ENCODE measurements at regions of chr1 and their contacts with region 1.

Region 1: DNA sequence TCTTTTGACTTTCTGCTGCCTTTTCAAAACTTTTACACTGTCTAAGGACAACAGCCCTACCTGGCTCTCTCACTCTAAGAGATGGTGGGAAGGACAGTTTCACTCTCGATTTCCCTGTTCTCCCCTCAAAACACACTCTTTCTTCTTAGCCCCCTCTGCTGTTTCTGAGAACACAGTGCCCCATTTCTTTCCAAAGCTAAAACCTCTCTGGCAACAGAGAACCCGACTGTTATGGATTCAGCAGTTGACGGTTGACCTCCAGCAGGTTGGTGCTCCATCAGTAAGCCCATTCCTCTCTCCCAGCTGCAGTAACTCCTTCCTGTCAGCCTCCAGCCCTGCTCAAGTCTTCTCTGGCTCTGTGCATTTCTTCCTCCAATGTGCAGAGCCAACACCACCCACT is 88.2 kb upstream of the ABCD3 start:
- DNase-seq: peak; percentile 76
- H3K4me3 ChIP-seq: no peak overlapping the region
- H3K27ac ChIP-seq: peak overlapping the region; percentile 26
- H3K4me1 ChIP-seq: peaks cover 50% of the 10 kb centered on the region
- H3K27me3 ChIP-seq: no peaks in the 10 kb centered on the region
- CTCF ChIP-seq: peak; percentile 65 to 70
- POLR2A ChIP-seq: no peak

Region 2: DNA sequence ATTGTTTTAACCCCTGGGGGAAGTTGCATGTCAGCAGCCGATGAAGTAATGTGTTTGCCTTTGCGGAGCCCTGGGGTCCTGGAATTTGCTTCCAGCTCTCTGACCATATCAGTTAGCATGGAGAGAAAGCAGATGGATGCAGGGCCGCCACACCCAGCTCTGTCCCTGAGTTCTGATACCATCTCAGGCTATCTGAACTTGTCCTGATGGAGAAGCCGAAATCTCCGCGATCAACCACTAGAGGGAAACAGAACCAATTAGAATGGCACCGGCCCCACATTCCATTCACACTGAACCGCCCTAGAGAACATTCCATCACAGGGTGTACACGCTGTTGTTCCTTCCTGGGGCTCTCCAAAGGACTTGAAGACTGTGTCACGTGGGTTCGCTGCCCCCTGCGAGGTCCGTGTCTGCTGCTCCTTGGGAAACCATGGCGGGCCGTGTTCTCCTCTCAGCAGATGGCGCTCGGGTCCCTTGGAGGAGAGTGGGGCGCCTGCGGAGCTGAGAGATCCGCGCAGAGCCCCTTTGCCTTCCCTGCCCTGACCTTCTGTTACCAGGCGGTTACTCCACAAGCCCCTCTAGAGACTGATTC is 284.4 kb before region 1 on chr1:
- CTCF ChIA-PET with region 1: interaction called, 1,439 read pairs
- POLR2A ChIA-PET with region 1: interaction called, 6 read pairs
- dilution Hi-C with region 1: no loop called
- intact Hi-C with region 1: loop called (anchors 1 kb)
- DNase-seq: peak; percentile 97
- H3K4me3 ChIP-seq: no peak overlapping the region
- H3K27ac ChIP-seq: peak overlapping the region; percentile 89
- H3K4me1 ChIP-seq: peaks cover 65% of the 10 kb centered on the region
- H3K27me3 ChIP-seq: no peaks in the 10 kb centered on the region
- CTCF ChIP-seq: peak; percentile 66 to 89
- POLR2A ChIP-seq: peak; percentile 80

Region 3: GRCh38 chr1:94160811-94161210 is 169.2 kb before region 1 on chr1:
- CTCF ChIA-PET with region 1: interaction called, 4 read pairs
- POLR2A ChIA-PET with region 1: no interaction called
- dilution Hi-C with region 1: no loop called
- intact Hi-C with region 1: loop called (anchors 5 kb)
- DNase-seq: peak; percentile 76
- H3K4me3 ChIP-seq: no peak overlapping the region
- H3K27ac ChIP-seq: peak overlapping the region; percentile 23
- H3K4me1 ChIP-seq: peaks cover 5% of the 10 kb centered on the region
- H3K27me3 ChIP-seq: no peaks in the 10 kb centered on the region
- CTCF ChIP-seq: no peak
- POLR2A ChIP-seq: no peak

Region 4: GRCh38 chr1:94199398-94199797 is 130.6 kb before region 1 on chr1:
- CTCF ChIA-PET with region 1: interaction called, 19 read pairs
- POLR2A ChIA-PET with region 1: no interaction called
- dilution Hi-C with region 1: no loop called
- intact Hi-C with region 1: no loop called
- DNase-seq: no peak
- H3K4me3 ChIP-seq: no peak overlapping the region
- H3K27ac ChIP-seq: no peak overlapping the region
- H3K4me1 ChIP-seq: peaks cover 7% of the 10 kb centered on the region
- H3K27me3 ChIP-seq: no peaks in the 10 kb centered on the region
- CTCF ChIP-seq: no peak
- POLR2A ChIP-seq: peak; percentile 27

Region 5: DNA sequence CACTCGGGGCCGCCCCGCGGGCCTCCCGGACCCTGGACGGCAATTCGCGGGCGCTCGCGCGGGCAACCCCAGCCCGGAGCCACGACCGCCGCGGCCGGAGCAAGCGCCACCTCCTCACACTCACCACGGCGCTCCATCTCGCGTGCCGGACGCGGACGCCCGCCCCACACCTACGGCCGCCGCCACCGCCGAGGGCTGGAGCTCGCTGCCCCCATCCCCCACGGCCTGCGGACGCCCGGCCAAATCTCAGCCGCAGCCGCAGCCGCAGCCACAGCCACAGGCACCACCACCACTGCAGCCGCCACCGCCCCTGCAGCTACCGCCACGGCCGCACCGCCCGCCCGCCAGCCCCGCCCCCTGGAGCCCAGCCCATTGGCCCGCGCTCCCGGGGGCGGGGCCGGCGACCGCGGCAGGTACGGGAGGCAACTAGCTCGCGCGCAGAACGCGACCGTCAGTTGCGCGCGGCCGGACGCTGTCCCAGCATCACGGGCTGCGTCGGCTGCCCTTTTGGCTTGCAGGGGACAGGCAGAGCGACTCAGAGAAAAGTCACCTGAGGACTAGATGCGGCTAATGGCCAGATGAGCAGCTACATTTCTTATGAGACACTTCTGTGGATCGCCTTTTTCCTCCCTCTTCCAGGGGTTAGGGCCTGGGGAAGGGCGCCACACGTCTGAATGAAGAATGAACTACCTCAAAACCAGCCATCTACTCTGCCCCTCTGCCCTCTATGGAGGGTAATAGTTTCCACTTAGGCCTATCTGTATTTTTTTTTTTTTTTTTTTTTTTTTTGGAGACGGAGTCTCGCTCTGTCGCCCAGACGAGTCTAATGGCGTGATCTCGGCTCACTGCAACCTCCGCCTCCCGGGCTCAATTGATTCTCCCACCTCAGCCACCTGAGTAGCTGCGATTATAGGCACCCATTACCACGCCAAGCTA is 92.4 kb before region 1 on chr1 and contains the start of gene ARHGAP29:
- CTCF ChIA-PET with region 1: interaction called, 91 read pairs
- POLR2A ChIA-PET with region 1: interaction called, 14 read pairs
- dilution Hi-C with region 1: no loop called
- intact Hi-C with region 1: loop called (anchors 1 kb)
- DNase-seq: peak; percentile 86
- H3K4me3 ChIP-seq: peak within 1 kb of the TSS; percentile 88 to 100 (median 95)
- H3K27ac ChIP-seq: peak within 1 kb of the TSS; percentile 93
- H3K4me1 ChIP-seq: peaks cover 67% of the 10 kb centered on the region
- H3K27me3 ChIP-seq: no peaks in the 10 kb centered on the region
- CTCF ChIP-seq: no peak
- POLR2A ChIP-seq: peak; percentile 83
- total RNA-seq, gene ARHGAP29: 199 and 215 TPM in 2 replicates

Region 6: DNA sequence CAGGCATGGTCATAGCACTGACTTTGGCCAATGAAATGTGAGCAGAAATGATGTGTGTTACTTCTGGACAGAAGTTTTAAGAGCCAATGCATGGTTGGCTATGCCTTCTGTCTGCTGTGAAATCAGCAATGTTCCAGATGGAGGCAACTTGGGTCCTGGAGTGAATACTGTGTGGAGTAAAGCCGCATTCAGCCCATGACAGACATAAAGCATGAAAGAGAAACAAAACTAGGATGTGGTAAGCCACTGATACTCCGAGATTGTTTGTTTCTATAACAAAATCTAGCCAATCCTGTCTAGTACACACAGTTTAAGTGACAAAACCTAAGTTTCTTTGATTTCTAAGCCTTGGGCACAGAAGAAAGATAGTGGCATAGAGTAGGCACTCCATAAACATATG is 45.5 kb before region 1 on chr1:
- CTCF ChIA-PET with region 1: interaction called, 3 read pairs
- POLR2A ChIA-PET with region 1: interaction called, 3 read pairs
- dilution Hi-C with region 1: no loop called
- intact Hi-C with region 1: loop called (anchors 1 kb)
- DNase-seq: no peak
- H3K4me3 ChIP-seq: no peak overlapping the region
- H3K27ac ChIP-seq: peak overlapping the region; percentile 47
- H3K4me1 ChIP-seq: peaks cover 45% of the 10 kb centered on the region
- H3K27me3 ChIP-seq: no peaks in the 10 kb centered on the region
- CTCF ChIP-seq: no peak
- POLR2A ChIP-seq: no peak

Region 7: GRCh38 chr1:94362466-94363058 is 32.6 kb after region 1 on chr1:
- CTCF ChIA-PET with region 1: no interaction called
- POLR2A ChIA-PET with region 1: no interaction called
- dilution Hi-C with region 1: no loop called
- intact Hi-C with region 1: no loop called
- DNase-seq: no peak
- H3K4me3 ChIP-seq: no peak overlapping the region
- H3K27ac ChIP-seq: no peak overlapping the region
- H3K4me1 ChIP-seq: no peaks in the 10 kb centered on the region
- H3K27me3 ChIP-seq: peaks cover 12 to 15% of the 10 kb centered on the region in 2 experiments
- CTCF ChIP-seq: no peak
- POLR2A ChIP-seq: no peak

Region 8: DNA sequence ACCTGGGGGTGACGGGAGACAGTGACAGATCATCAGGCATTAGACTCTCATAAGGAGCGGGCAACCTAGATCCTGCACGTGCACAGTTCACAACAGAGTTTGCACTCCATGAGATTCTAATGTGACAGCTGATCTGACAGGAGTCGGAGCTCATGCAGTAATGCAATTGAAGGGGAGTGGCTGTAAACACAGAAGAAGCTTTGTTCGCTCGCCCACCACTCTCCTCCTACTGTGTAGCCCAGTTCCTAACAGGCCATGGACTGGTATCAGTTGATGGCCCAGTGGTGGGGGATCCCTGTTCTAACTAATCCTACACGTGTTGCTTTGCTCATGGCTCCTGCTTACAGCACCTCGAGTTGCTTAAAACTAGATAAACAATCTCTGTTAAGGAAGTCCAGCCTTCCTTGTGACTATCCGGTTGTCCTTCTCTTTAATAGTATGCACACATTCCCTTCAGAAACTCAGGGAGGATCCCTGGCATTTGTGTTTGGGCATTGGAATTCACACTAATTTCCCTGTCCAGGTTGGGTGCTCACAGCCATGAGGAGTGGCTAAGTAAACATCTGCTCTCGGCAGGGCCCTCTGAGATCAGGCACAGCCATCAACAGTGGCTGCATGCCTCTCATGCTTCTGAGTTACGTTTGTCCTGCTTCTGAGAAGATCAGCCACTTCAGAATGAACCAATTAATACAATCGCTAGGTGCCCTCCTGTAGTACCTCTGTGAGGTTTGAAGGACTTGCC is 232.7 kb after region 1 on chr1:
- CTCF ChIA-PET with region 1: no interaction called
- POLR2A ChIA-PET with region 1: no interaction called
- dilution Hi-C with region 1: no loop called
- intact Hi-C with region 1: no loop called
- DNase-seq: no peak
- H3K4me3 ChIP-seq: no peak overlapping the region
- H3K27ac ChIP-seq: no peak overlapping the region
- H3K4me1 ChIP-seq: no peaks in the 10 kb centered on the region
- H3K27me3 ChIP-seq: peaks cover 0 to 8% of the 10 kb centered on the region in 2 experiments
- CTCF ChIP-seq: no peak
- POLR2A ChIP-seq: no peak

Region 9: DNA sequence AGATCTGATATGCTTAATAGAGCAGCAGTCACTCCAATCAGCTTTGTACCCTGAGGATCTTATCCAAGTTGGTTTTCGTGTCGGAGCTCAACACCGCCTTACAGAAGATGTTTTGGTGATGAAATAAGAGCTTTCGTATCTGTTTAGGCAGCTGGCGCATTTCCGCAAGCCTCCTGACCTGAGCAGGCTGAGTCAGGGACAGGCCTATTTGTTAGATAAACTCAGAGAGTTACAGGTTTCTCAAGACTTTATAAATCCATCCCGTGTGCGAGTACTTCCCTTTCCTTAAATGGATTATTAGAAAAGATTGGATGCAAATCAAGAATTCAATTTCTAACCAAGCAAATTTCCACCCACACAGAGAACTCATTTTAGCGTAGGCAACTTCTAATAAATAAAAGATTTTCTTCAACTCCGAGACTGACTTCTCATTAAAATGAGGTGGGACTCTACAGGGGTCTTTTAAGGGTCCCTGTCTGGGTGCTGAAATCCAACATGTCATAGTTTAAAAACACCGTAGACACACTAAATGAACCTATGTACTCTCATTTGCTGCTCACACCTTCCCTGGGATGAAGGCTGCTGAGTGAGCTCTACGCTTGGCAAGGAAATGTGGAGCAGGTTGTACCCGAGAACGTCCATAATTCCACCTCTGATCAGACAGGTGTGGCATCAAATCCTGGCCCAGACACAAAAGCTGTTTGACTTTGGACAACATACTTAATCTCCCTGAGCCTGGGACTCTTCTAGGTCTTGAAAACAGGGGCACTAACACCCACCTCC is 318.4 kb after region 1 on chr1:
- CTCF ChIA-PET with region 1: no interaction called
- POLR2A ChIA-PET with region 1: no interaction called
- dilution Hi-C with region 1: no loop called
- intact Hi-C with region 1: no loop called
- DNase-seq: peak; percentile 6
- H3K4me3 ChIP-seq: no peak overlapping the region
- H3K27ac ChIP-seq: no peak overlapping the region
- H3K4me1 ChIP-seq: peaks cover 2% of the 10 kb centered on the region
- H3K27me3 ChIP-seq: peaks cover 2 to 5% of the 10 kb centered on the region in 2 experiments
- CTCF ChIP-seq: no peak
- POLR2A ChIP-seq: no peak

Region 10: DNA sequence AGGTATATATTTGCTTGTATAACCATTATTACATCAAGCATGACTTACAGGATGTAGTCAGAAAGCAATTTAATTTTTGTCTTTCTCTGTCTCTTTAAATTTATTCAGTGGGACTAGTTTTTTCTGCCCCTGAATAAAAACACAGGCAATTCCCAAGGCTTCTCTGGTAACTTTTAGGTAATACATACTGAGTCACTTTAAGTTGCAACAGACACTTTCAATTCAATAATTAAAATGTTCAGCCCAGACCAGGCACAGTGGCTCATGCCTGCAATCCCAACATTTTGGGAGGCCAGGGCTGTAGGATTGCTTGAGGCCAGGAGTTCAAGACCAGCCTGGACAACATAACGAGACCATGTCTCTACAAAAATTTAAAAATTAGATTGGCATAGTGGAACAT is 502.5 kb after region 1 on chr1:
- CTCF ChIA-PET with region 1: no interaction called
- POLR2A ChIA-PET with region 1: no interaction called
- dilution Hi-C with region 1: no loop called
- intact Hi-C with region 1: no loop called
- DNase-seq: no peak
- H3K4me3 ChIP-seq: no peak overlapping the region
- H3K27ac ChIP-seq: no peak overlapping the region
- H3K4me1 ChIP-seq: no peaks in the 10 kb centered on the region
- H3K27me3 ChIP-seq: peaks cover 13 to 17% of the 10 kb centered on the region in 2 experiments
- CTCF ChIP-seq: no peak
- POLR2A ChIP-seq: no peak

Measured in endothelial cell of umbilical vein (primary cell).